ENCODE measurements at regions of chr14 and their contacts with region 1.

Region 1: GRCh38 chr14:69242311-69243224 is 17.4 kb upstream of the GALNT16 start:
- DNase-seq: no peak
- ATAC-seq: peak; percentile 61

Region 2: DNA sequence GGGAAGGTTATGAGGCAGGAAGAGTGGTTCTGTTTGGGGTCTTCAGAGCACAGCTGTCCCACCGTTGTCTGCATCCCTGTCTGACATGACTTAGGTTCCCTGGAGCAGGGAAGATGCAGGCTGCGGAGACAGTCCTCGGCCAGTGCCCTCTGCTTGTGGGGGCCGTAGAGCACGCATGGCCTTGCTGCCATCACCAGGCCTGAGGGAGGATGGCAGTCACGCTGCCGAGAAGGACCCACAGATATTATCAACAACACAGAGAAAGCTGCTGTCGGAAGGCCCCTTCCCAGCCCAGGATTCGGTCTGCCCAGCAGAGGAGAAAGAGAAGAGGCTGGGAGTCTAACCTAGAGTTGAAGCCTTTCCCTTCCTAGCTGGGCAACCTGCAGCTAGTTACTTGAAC is 120.5 kb after region 1 on chr14:
- intact Hi-C with region 1: loop called (anchors 1 kb)
- DNase-seq: no peak
- ATAC-seq: peak; percentile 82

Region 3: DNA sequence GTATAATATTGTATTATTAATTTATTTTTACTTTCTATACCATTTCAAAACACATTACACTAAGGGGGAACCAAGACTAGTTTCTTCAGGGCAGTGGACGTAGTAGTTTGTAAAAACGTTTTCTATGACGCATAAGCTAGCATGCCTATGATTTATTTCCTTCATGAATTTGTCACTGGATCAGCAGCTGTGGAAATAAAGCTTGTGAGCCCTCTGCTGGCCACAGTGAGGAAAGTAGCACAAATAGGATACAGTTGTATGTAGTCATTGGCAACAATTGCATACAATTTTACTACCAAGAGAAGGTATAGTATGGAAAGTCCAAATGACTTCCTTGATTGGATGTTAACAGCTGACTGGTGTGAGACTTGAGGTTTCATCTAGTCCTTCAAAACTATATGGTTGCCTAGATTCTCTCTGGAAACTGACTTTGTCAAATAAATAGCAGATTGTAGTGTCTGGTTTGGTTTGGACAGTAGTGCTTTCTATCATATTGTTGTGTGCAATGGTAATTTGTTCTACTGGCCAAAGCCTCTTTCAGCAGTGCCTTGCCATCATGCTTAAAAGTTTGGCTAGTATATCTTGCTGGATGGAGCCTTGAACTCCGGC is 217.6 kb after region 1 on chr14:
- intact Hi-C with region 1: loop called (anchors 1 kb)
- DNase-seq: no peak
- ATAC-seq: peak; percentile 79